ENCODE measurements at regions of chr15 and their contacts with region 1.

Region 1: DNA sequence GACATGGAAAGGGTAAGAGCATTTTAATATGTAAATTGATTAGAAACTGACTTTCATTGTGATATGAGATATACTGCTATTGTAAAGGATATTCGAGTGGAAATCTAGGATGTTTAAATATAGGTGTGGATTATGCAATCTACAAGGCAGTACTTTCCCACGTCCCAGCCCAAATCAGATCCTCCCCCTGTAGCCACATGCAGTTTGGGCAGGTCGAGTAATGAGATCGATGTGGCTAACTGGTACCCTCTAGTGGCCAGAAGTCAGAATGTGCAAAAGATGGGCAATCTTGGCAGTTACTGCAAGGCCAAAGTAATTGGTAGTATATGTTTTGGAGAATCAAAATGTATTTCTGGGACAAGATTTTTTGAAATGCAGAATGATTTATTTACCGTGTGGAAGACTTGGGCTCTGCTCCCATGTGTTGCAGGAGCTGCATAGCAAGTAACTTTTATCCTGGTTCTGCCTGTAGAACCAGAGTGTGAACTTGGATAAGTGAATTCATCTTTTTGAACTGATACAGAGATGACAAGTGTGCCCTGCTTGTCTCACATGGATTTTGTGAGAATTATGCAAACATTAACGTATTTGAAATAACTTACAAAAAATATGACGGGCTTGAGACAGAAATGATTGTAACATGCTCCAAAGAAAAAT is 94.5 kb upstream of the ADAMTSL3 start:
- DNase-seq: peak; percentile 59
- CTCF ChIP-seq: peak; percentile 77

Region 2: GRCh38 chr15:83250801-83251200 is 308.6 kb before region 1 on chr15:
- in situ Hi-C with region 1: loop called (anchors 25 kb)
- DNase-seq: no peak
- CTCF ChIP-seq: no peak

Region 3: DNA sequence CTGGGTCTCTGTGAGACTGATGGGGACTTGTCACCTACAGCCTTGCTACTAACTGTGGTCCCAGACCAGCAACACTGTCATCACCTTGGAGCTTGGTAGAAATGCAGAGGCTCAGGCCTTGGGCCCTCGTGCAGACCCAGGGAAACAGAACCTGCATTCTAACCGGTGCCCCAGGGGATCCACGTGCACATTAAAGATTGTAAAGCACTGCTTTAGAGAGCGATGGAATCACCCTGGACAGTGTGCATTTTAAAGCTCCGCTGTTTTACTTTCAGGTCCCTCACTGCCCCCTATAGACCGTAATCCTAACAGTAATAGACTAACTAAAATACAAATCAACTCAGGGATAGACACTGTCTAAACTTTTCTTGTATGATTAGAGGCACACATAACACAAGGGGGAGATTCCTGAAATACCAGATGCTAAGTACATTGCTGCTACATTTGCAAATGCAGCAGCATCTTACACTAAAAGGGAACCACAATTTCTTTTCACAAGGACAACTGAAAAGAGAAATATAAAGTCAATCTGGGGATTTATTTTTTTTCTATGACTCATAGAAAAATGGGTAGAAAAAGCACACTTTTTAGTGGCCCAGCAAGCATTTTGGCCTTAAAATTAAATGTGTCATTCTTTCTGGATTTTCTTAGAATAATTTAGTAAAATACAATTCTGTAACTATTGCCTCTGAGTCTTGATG is 122.8 kb before region 1 on chr15:
- in situ Hi-C with region 1: loop called (anchors 10 kb)
- DNase-seq: no peak
- CTCF ChIP-seq: peak; percentile 1

Measured in GM13976 (cell line).